WTC11 (cell line): ENCODE measurements at regions of chr18 and their contacts with region 1.

Region 1: GRCh38 chr18:839224-840022 is 27.4 kb upstream of the YES1 start:
- DNase-seq: peak; percentile 94
- ATAC-seq: peak; percentile 94
- H3K4me3 Mint-ChIP-seq: no peak overlapping the region; the same call in 1 of the 2 replicates
- H3K27ac Mint-ChIP-seq: no peak overlapping the region
- H3K4me1 Mint-ChIP-seq: peaks cover 8% of the 10 kb centered on the region; the same call in 1 of the 2 replicates
- H3K27me3 Mint-ChIP-seq: peaks cover 78% of the 10 kb centered on the region
- CTCF ChIP-seq: peak; percentile 97

Region 2: GRCh38 chr18:623761-624620 is 215.4 kb before region 1 on chr18:
- CTCF ChIA-PET with region 1: interaction called, 20 read pairs
- POLR2A ChIA-PET with region 1: no interaction called
- DNase-seq: peak; percentile 81
- ATAC-seq: peak; percentile 99
- H3K4me3 Mint-ChIP-seq: no peak overlapping the region
- H3K27ac Mint-ChIP-seq: no peak overlapping the region
- H3K4me1 Mint-ChIP-seq: peaks cover 9% of the 10 kb centered on the region
- H3K27me3 Mint-ChIP-seq: no peaks in the 10 kb centered on the region
- CTCF ChIP-seq: peak; percentile 36; the same call in 1 of the 2 replicates

Region 3: DNA sequence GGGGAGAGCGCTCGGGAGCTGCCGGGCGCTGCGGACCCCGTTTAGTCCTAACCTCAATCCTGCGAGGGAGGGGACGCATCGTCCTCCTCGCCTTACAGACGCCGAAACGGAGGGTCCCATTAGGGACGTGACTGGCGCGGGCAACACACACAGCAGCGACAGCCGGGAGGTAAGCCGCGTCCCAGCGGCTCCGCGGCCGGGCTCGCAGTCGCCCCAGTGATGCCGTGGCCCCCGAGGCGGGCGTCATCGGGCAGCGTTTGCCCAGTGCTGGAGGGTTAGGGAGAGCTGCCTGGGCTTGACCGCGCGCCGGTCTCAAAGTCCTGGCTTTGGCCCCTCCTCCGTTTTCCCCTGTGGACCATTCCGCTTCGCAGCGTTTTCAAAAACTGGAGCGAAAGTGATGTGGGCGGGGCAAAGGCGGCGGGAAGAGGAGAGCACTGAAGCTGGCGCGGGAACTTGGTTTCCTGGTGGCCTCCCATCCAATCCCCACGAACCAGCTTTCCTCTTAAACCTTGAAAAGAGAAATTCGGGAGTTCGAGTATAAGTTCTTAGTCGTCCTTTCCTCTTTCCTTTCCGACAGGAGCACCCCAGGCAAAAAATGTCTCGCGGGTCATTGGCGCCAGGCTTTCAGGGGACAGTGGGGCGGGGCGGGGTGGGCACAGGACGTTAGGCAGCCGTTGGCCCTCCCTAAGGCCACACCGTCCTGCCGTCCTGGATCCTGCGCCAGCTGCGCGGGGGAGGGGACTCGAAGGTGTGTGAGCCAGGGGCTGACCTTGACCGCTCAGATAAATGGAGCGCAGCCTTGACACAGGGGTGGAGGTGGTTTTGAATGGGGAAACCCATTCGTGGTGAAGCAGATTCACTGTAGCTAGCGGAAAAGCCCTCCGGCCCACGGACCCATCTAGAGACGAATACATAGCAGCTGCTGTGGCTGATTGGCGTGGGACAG is 181.1 kb before region 1 on chr18:
- CTCF ChIA-PET with region 1: interaction called, 17 read pairs
- POLR2A ChIA-PET with region 1: interaction called, 3 read pairs
- DNase-seq: peak; percentile 90
- ATAC-seq: peak; percentile 80
- H3K4me3 Mint-ChIP-seq: peak overlapping the region; percentile 88
- H3K27ac Mint-ChIP-seq: peak overlapping the region; percentile 76
- H3K4me1 Mint-ChIP-seq: peaks cover 40% of the 10 kb centered on the region
- H3K27me3 Mint-ChIP-seq: no peaks in the 10 kb centered on the region
- CTCF ChIP-seq: no peak

Region 4: GRCh38 chr18:686339-687111 is 152.9 kb before region 1 on chr18:
- CTCF ChIA-PET with region 1: interaction called, 28 read pairs
- POLR2A ChIA-PET with region 1: no interaction called
- DNase-seq: peak; percentile 54
- ATAC-seq: peak; percentile 88
- H3K4me3 Mint-ChIP-seq: peak overlapping the region; percentile 30
- H3K27ac Mint-ChIP-seq: peak overlapping the region; percentile 44
- H3K4me1 Mint-ChIP-seq: peaks cover 35% of the 10 kb centered on the region
- H3K27me3 Mint-ChIP-seq: no peaks in the 10 kb centered on the region
- CTCF ChIP-seq: no peak

Region 5: GRCh38 chr18:712401-713134 is 126.9 kb before region 1 on chr18 and contains the start of gene ENOSF1:
- CTCF ChIA-PET with region 1: interaction called, 45 read pairs
- POLR2A ChIA-PET with region 1: no interaction called
- DNase-seq: peak; percentile 95
- ATAC-seq: peak; percentile 95
- H3K4me3 Mint-ChIP-seq: peak within 1 kb of the TSS; percentile 63
- H3K27ac Mint-ChIP-seq: no peak within 1 kb of the TSS
- H3K4me1 Mint-ChIP-seq: peaks cover 8% of the 10 kb centered on the region
- H3K27me3 Mint-ChIP-seq: no peaks in the 10 kb centered on the region; the same call in 1 of the 2 replicates
- CTCF ChIP-seq: peak; percentile 91
- total RNA-seq, gene ENOSF1: 44.1 to 52.9 TPM (median 44.6 TPM) in 3 replicates

Region 6: DNA sequence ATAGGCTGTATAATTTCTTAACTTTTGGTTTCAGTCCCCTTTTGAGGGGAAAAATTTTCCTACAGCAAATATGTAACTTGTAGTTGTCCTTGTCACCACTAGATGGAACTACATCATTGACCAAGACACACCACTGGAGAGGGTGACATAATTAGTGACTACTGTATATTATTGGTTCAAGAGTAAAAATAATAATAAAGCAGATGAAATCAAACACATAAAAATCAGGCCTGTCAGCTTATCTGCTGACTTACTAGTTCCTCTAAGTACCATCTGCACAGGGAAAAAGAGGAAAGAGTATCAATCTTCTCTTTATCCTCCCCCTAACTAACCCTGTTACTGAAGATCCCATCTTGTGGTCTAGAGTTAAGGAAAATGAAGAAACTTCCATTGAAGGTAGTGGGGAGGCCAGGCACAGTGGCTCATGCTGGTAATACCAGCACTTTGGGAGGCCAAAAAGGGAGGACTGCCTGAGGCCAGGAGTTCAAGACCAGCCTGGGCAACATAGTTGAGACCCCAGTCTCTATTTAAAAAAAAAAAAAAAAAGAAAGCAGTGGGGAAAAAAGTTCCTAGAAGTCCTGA is 97.4 kb before region 1 on chr18:
- CTCF ChIA-PET with region 1: interaction called, 22 read pairs
- POLR2A ChIA-PET with region 1: no interaction called
- DNase-seq: no peak
- ATAC-seq: peak; percentile 66
- H3K4me3 Mint-ChIP-seq: no peak overlapping the region
- H3K27ac Mint-ChIP-seq: no peak overlapping the region
- H3K4me1 Mint-ChIP-seq: no peaks in the 10 kb centered on the region
- H3K27me3 Mint-ChIP-seq: no peaks in the 10 kb centered on the region
- CTCF ChIP-seq: peak; percentile 68

Region 7: GRCh38 chr18:812376-813171 is 26.8 kb before region 1 on chr18:
- CTCF ChIA-PET with region 1: interaction called, 12 read pairs
- POLR2A ChIA-PET with region 1: no interaction called
- DNase-seq: peak; percentile 83
- ATAC-seq: peak; percentile 83
- H3K4me3 Mint-ChIP-seq: peak overlapping the region; percentile 95
- H3K27ac Mint-ChIP-seq: peak overlapping the region; percentile 100
- H3K4me1 Mint-ChIP-seq: peaks cover 44% of the 10 kb centered on the region
- H3K27me3 Mint-ChIP-seq: no peaks in the 10 kb centered on the region; the same call in 1 of the 2 replicates
- CTCF ChIP-seq: no peak

Region 8: DNA sequence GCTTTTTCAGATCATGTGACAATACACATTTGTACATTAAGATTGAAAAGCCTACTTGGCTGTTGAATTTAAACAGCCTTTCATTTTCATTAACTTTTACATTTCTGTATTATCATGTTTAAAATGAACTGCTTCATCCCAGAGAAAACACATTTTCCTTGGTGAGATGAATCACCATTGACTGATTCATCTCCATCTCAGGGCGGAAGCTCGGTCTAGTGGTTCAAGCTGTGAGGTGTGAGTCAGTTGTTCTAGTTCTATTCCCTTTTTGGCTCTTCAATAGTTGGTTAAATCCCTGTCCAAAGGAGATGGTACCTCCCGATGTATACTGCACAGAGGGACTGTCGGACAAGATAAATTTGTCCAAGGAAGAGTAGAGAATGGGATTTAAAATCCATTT is 255.0 kb after region 1 on chr18:
- CTCF ChIA-PET with region 1: no interaction called
- POLR2A ChIA-PET with region 1: no interaction called
- DNase-seq: no peak
- ATAC-seq: no peak
- H3K4me3 Mint-ChIP-seq: no peak overlapping the region
- H3K27ac Mint-ChIP-seq: no peak overlapping the region
- H3K4me1 Mint-ChIP-seq: peaks cover 29% of the 10 kb centered on the region
- H3K27me3 Mint-ChIP-seq: peaks cover 8% of the 10 kb centered on the region
- CTCF ChIP-seq: no peak